ENCODE measurements at regions of chr12 and their contacts with region 1.

Region 1: DNA sequence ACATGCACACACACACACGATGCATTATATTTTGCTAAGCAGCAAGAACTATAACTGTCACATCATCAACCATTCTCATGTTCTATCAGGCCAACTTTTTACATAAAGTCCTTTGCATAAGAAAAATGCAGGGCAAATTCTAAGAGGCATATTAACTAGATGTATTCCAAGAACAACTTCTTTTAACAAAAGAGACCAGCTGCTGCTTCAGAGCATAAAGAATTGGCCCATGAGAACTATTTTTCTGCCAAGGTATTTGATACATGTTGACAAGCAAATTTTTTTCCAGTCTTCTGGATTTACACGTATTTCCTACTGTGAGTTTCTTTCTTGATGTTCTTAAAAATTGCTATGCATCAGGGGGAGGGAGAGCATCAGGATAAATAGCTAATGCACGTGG is 27.2 kb downstream of the GLT8D2 start:
- DNase-seq: no peak
- ATAC-seq: no peak
- H3K4me3 ChIP-seq: no peak overlapping the region
- H3K4me3 Mint-ChIP-seq: no peak overlapping the region
- H3K27ac ChIP-seq: no peak overlapping the region
- H3K27ac Mint-ChIP-seq: no peak overlapping the region
- H3K4me1 ChIP-seq: no peaks in the 10 kb centered on the region
- H3K4me1 Mint-ChIP-seq: no peaks in the 10 kb centered on the region
- H3K27me3 ChIP-seq: peaks cover 0 to 4% of the 10 kb centered on the region in 2 experiments
- H3K27me3 Mint-ChIP-seq: peaks cover 22 to 23% of the 10 kb centered on the region in 2 donors

Region 2: GRCh38 chr12:105164068-105164467 is 1141.3 kb after region 1 on chr12:
- CTCF ChIA-PET with region 1: no interaction called
- POLR2A ChIA-PET with region 1: interaction called in 1 of 2 experiments, 11 read pairs
- DNase-seq: no peak
- ATAC-seq: no peak
- H3K4me3 ChIP-seq: no peak overlapping the region
- H3K4me3 Mint-ChIP-seq: no peak overlapping the region
- H3K27ac ChIP-seq: no peak overlapping the region
- H3K27ac Mint-ChIP-seq: no peak overlapping the region
- H3K4me1 ChIP-seq: no peaks in the 10 kb centered on the region
- H3K4me1 Mint-ChIP-seq: no peaks in the 10 kb centered on the region
- H3K27me3 ChIP-seq: no peaks in the 10 kb centered on the region
- H3K27me3 Mint-ChIP-seq: no peaks in the 10 kb centered on the region